HepG2 (cell line): ENCODE measurements at regions of chr5 and their contacts with region 1.

Region 1: GRCh38 chr5:611721-612486 is at the start of gene CEP72:
- DNase-seq: peak; percentile 68
- ATAC-seq: peak; percentile 83
- H3K4me3 ChIP-seq: peak within 1 kb of the TSS; percentile 79 to 89 (median 84)
- H3K27ac ChIP-seq: peak within 1 kb of the TSS; percentile 58
- H3K4me1 ChIP-seq: peaks cover 69% of the 10 kb centered on the region
- H3K27me3 ChIP-seq: no peaks in the 10 kb centered on the region; a peak in 1 of 5 replicates
- CTCF ChIP-seq: no peak
- EP300 ChIP-seq: no peak
- POLR2A ChIP-seq: no peak; a peak in 1 of 4 replicates
- RAD21 ChIP-seq: no peak
- total RNA-seq, gene CEP72: 8.1 and 9.4 TPM in 2 replicates

Region 2: GRCh38 chr5:472656-473553 is 139.0 kb before region 1 on chr5:
- CTCF ChIA-PET with region 1: no interaction called
- POLR2A ChIA-PET with region 1: no interaction called
- in situ Hi-C with region 1: no loop called
- intact Hi-C with region 1: loop called (anchors 2 kb)
- DNase-seq: peak; percentile 52
- ATAC-seq: peak; percentile 58
- H3K4me3 ChIP-seq: peak overlapping the region; percentile 79 to 89 (median 89)
- H3K27ac ChIP-seq: peak overlapping the region; percentile 72
- H3K4me1 ChIP-seq: peaks cover 32% of the 10 kb centered on the region
- H3K27me3 ChIP-seq: peaks cover 8 to 32% of the 10 kb centered on the region in 2 experiments
- CTCF ChIP-seq: peak; percentile 8; the same call in 1 of the 2 replicates
- EP300 ChIP-seq: no peak
- POLR2A ChIP-seq: peak in 1 of 2 experiments; percentile 69; a peak in 2 of 4 replicates
- RAD21 ChIP-seq: peak; percentile 53

Region 3: GRCh38 chr5:529692-530372 is 82.1 kb before region 1 on chr5:
- CTCF ChIA-PET with region 1: no interaction called
- POLR2A ChIA-PET with region 1: no interaction called
- in situ Hi-C with region 1: no loop called
- intact Hi-C with region 1: loop called (anchors 10 kb)
- DNase-seq: no peak
- ATAC-seq: no peak
- H3K4me3 ChIP-seq: no peak overlapping the region
- H3K27ac ChIP-seq: no peak overlapping the region
- H3K4me1 ChIP-seq: peaks cover 64% of the 10 kb centered on the region
- H3K27me3 ChIP-seq: peaks cover 5 to 29% of the 10 kb centered on the region in 2 experiments; a peak in 4 of 5 replicates
- CTCF ChIP-seq: no peak
- EP300 ChIP-seq: no peak
- POLR2A ChIP-seq: no peak
- RAD21 ChIP-seq: no peak

Region 4: DNA sequence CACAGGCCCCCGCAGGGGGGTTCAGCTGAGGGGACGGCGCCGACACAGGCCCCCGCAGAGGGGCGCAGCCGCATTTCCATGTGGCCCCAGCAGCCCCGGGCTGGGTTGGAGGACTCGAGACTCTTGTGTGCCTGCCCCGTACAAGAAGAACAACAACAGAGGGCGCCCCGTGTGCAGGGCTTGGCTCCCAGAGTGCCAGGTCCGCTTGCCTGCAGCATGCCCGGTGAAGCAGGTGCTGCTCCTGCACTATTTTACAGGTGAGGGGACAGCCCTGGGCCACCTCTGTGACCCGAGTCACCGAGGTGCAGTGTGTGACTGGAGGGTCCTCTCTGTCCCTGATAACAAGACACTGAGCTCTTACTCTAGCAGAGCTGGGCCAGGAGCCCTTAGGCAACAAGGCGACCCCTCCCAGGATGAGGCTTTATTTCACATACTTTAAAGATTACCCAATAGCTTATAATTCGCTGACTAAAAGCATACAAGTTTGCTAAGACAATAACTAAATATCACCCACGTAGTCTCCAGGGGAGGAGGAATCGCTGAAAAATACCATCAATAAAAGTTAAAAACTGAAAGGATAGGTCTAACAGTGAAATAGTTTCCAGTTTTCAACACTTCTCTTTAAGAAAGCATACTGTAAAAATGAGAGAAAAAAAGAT is 46.0 kb before region 1 on chr5:
- CTCF ChIA-PET with region 1: no interaction called
- POLR2A ChIA-PET with region 1: no interaction called
- in situ Hi-C with region 1: no loop called
- intact Hi-C with region 1: no loop called
- DNase-seq: no peak
- ATAC-seq: peak; percentile 53
- H3K4me3 ChIP-seq: no peak overlapping the region
- H3K27ac ChIP-seq: no peak overlapping the region
- H3K4me1 ChIP-seq: no peaks in the 10 kb centered on the region
- H3K27me3 ChIP-seq: peaks cover 11 to 44% of the 10 kb centered on the region in 2 experiments
- CTCF ChIP-seq: peak; percentile 53
- EP300 ChIP-seq: no peak
- POLR2A ChIP-seq: no peak
- RAD21 ChIP-seq: no peak

Region 5: GRCh38 chr5:759111-759751 is 147.3 kb after region 1 on chr5:
- CTCF ChIA-PET with region 1: no interaction called
- POLR2A ChIA-PET with region 1: no interaction called
- in situ Hi-C with region 1: no loop called
- intact Hi-C with region 1: no loop called
- DNase-seq: peak; percentile 81
- ATAC-seq: peak; percentile 68
- H3K4me3 ChIP-seq: peak overlapping the region in 1 of 3 experiments; percentile 51; a peak in 2 of 6 replicates
- H3K27ac ChIP-seq: peak overlapping the region; percentile 14
- H3K4me1 ChIP-seq: peaks cover 47% of the 10 kb centered on the region
- H3K27me3 ChIP-seq: peaks cover 3 to 57% of the 10 kb centered on the region in 2 experiments
- CTCF ChIP-seq: 0 out of 2 replicates have a peak, but pooled peaks have one; percentile 24
- EP300 ChIP-seq: peak; percentile 62 to 91
- POLR2A ChIP-seq: peak in 1 of 2 experiments; percentile 68; a peak in 2 of 4 replicates
- RAD21 ChIP-seq: no peak